Cardiac septum (tissue), 1 donor: ENCODE measurements at regions of chr1 and their contacts with region 1.

Region 1: DNA sequence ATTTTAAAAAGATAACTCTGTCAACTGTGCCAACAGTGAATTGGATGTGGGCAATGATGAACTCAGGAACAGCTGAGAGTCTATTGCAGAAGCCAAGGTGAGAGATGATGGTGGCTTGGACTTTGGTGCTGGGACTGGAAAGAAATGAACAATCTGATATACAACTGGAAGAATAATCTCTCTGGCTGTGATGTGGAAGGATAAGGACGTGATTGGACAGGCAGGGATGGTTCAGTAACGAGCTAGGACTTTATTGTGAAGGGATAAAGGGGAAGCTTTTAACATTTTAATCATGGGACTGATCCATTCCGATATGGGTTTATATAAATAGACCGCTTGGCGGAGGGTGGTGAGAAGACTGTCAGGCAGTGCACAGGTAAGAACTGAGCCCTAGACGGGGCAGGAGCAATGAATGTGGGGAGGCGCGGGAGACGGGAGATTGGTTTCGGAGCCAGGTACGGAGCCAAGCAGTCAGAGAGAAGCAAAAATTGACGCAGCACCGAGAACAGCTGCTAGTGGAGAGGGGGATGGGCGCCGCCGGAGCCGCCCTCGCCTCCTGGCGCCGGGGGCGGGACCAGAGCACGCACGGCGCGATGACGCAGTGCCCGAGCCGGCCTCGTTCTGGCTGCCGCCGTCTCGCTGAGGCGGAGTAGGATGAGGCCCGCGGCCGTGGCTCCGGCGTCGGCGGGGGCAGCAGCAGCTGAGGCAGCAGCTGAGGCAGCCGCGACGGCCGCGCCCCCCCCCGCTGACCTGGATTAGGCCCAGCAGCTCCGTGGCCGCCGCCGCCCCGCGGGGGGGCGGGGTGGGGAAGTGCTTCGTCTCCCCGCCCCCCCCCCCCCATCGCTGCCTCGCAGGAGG is at the start of gene RNF11:
- DNase-seq: peak; percentile 97
- total RNA-seq, gene RNF11: 137 TPM

Region 2: DNA sequence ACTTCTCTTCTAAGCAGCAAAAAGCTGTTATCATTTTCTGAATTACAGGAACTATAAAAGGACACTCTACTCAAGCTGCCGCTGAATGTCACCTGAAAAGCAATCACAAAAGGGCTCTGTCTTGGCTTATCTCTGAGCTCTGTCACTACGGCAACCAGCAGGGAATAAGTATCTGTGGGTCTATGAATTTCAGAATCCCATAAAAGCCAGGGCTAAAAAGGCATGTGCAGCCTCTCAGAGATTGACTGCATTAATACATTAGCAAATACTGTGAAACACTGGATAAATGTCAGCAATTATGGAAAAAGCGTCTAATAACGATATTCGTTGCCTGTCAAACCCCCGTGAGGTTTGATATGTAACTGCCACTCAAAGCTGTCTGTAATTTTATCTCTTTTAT is 602.4 kb before region 1 on chr1:
- intact Hi-C with region 1: no loop called
- DNase-seq: no peak

Region 3: DNA sequence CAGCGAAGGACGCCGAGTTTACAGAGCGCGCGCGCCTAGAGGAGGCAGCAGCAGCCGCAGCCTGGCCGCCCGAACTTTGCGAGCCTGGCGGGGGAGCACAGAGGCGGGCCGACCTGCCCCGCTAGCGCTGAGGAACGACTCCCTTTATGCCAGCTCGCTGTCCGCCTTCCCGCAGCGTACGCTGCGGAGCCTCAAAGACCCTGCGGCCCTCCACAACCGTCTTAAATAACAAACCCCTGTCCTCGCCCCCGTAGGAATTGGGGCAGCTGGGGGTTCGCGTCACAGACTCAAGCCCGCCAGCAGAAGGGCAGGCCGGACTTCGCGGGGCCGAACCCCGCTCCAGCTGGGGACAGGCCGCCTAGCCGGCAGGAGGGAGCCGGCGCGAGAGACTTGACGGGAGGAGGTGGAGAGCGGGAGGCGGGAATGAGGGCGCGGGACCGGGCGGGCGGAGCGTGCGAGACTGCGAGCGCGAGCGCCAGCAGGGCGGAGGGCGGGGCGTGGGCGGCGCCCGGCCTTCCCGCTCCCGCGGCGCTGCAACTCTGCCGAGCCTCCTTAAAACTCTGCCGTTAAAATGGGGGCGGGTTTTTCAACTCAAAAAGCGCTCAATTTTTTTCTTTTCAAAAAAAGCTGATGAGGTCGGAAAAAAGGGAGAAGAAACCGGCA is 267.6 kb before region 1 on chr1:
- intact Hi-C with region 1: loop called (anchors 5 kb)
- DNase-seq: peak; percentile 97

Region 4: GRCh38 chr1:51131185-51131584 is 104.7 kb before region 1 on chr1:
- intact Hi-C with region 1: no loop called
- DNase-seq: no peak

Region 5: GRCh38 chr1:51192213-51192843 is 43.6 kb before region 1 on chr1:
- intact Hi-C with region 1: loop called (anchors 5 kb)
- DNase-seq: no peak

Region 6: GRCh38 chr1:51284487-51284954 is 48.6 kb after region 1 on chr1:
- intact Hi-C with region 1: loop called (anchors 5 kb)
- DNase-seq: no peak

Region 7: DNA sequence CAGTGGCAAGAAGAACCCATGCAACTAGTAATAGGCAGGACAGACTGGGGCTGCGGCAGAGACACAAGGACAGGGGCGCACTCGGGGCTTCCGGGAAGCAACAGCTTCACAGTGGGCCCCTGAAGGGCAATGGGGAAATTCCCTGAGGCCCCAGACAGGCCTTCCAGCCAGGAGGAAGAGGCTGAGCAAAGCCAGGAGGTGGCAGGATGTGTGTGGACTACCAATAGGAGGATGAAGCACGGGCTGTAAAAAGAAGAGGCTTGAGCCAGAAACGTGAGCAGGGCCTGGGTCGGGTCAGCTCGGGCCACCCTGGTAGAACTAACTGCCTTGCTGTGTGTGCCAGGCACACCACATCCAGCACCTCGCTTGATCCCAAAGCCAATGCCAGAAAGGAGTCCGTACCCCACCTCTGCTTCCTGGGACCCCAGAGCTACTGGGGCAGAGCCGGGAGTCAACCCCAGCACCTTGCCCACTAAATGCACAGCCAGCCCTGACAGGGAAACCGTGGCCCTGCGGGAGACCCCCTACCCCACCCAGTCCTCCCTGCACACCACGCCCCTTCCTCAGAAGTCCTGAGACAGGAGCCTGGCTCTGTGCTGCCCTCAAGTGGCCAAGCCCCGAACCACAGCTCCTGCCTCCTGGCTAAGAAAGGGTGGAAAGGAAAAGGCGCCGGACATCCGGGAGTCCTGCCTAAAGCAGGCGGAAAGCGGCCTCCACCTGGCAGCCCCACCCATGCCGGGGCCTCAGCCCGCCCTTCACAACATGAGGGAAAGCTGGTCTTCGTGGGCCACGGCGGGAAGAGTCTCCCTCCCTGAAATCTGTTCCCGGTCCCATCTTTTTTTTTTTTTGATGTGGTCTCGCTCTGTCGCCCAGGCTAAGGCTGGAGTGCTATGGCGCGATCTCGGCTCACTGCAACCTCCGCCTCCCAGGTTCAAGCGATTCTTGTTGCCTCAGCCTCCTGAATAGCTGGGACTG is 60.8 kb after region 1 on chr1:
- intact Hi-C with region 1: loop called (anchors 5 kb)
- DNase-seq: peak; percentile 92

Region 8: GRCh38 chr1:51519048-51519864 is 283.4 kb after region 1 on chr1 and contains the start of gene EPS15:
- intact Hi-C with region 1: loop called (anchors 5 kb)
- DNase-seq: peak; percentile 97
- total RNA-seq, gene EPS15: 46.6 TPM